Panc1 (cell line): ENCODE measurements at regions of chr13 and their contacts with region 1.

Region 1: DNA sequence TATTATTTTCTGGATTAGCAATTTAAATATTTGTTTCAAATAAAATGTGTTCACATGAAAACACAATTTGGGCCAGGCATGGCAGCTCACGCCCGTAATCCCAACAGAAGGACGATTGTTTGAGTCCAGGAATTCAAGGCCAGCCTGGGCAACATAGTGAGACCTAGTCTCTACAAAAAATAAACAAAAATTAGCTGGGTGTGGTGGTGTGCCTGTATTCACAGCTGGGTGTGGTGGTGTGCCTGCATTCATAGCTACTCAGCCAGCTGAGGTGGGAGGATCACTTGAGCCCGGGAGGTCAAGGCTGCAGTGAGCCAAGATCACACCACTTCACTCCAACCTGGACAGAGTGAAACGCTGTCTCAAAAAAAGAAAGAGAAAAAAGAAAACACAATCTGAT is 46.4 kb downstream of the KPNA3 start:
- DNase-seq: no peak
- ATAC-seq: no peak
- H3K4me3 ChIP-seq: no peak overlapping the region
- H3K27ac ChIP-seq: no peak overlapping the region
- H3K4me1 ChIP-seq: no peaks in the 10 kb centered on the region
- H3K27me3 ChIP-seq: no peaks in the 10 kb centered on the region
- CTCF ChIP-seq: no peak

Region 2: GRCh38 chr13:49792550-49793324 is 46.6 kb after region 1 on chr13 and contains the start of gene KPNA3:
- CTCF ChIA-PET with region 1: no interaction called
- POLR2A ChIA-PET with region 1: interaction called, 15 read pairs
- in situ Hi-C with region 1: no loop called
- intact Hi-C with region 1: no loop called
- DNase-seq: peak; percentile 75
- ATAC-seq: peak; percentile 96
- H3K4me3 ChIP-seq: peak within 1 kb of the TSS; percentile 73 to 82
- H3K27ac ChIP-seq: peak within 1 kb of the TSS; percentile 78
- H3K4me1 ChIP-seq: peaks cover 6% of the 10 kb centered on the region
- H3K27me3 ChIP-seq: no peaks in the 10 kb centered on the region
- CTCF ChIP-seq: peak; percentile 58
- total RNA-seq, gene KPNA3: 36.8 TPM

Region 3: GRCh38 chr13:49908637-49909036 is 162.5 kb after region 1 on chr13:
- CTCF ChIA-PET with region 1: no interaction called
- POLR2A ChIA-PET with region 1: no interaction called
- in situ Hi-C with region 1: no loop called
- intact Hi-C with region 1: no loop called
- DNase-seq: no peak
- ATAC-seq: no peak
- H3K4me3 ChIP-seq: no peak overlapping the region
- H3K27ac ChIP-seq: no peak overlapping the region
- H3K4me1 ChIP-seq: no peaks in the 10 kb centered on the region
- H3K27me3 ChIP-seq: no peaks in the 10 kb centered on the region
- CTCF ChIP-seq: peak; percentile 46; the same call in 1 of the 2 replicates